ENCODE measurements at regions of chr15 and their contacts with region 1.

Region 1: GRCh38 chr15:68536331-68537095 is 42.3 kb upstream of the CORO2B start:
- DNase-seq: no peak
- ATAC-seq: peak; percentile 54
- H3K4me3 ChIP-seq: no peak overlapping the region
- H3K27ac ChIP-seq: no peak overlapping the region
- H3K4me1 ChIP-seq: no peaks in the 10 kb centered on the region
- H3K27me3 ChIP-seq: no peaks in the 10 kb centered on the region
- CTCF ChIP-seq: no peak
- EP300 ChIP-seq: no peak
- POLR2A ChIP-seq: no peak
- RAD21 ChIP-seq: no peak

Region 2: GRCh38 chr15:68383161-68384074 is 153.1 kb before region 1 on chr15:
- CTCF ChIA-PET with region 1: no interaction called
- POLR2A ChIA-PET with region 1: no interaction called
- RAD21 ChIA-PET with region 1: no interaction called
- SMC1A ChIA-PET with region 1: no interaction called
- in situ Hi-C with region 1: no loop called
- intact Hi-C with region 1: loop called (anchors 10 kb)
- DNase-seq: no peak
- ATAC-seq: peak; percentile 79
- H3K4me3 ChIP-seq: no peak overlapping the region
- H3K27ac ChIP-seq: no peak overlapping the region
- H3K4me1 ChIP-seq: no peaks in the 10 kb centered on the region
- H3K27me3 ChIP-seq: no peaks in the 10 kb centered on the region; a peak in 2 of 4 replicates
- CTCF ChIP-seq: peak; percentile 54 to 69 (median 59)
- EP300 ChIP-seq: no peak
- POLR2A ChIP-seq: no peak
- RAD21 ChIP-seq: peak; percentile 60

Region 3: DNA sequence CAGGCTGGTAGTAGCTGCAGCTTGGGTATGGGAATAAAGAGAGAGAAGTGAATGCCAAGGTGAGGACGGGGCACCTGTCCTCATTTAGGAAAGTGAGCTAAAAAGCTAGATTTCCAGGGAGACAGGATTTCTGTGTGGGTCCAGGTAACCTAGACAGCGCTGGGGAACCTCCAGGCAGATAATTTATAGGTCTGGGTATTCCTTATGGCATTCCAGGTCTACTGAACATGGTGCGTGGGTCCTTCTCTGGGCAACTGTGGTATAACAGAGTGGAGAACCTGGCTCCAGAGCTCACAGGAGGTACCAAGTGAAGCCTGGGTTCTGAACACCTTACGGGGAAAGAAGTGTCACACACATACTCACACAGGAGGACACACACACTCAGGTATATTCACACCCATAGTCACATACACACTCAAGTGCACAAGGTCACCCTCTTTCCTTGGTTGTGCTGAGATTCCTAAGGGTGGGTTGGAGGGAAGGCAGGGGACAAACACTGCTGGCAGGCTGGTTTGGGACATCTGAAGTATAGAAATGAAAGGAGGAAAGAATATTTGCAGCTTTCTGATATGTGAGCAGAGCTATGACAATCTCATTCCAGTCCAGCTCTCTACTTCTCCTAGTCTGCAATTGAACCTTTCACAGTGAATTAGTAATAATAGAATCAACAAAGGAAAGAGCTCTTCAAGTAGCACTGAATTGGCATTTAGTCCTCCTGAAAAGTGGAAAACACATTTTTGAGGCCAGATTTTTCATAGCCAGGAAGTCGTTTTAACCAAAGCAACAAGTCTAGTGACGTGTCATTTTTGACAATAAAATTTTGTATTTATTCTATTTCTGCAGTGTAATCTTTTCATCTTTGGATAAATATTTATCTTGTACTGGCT is 67.1 kb before region 1 on chr15:
- CTCF ChIA-PET with region 1: no interaction called
- POLR2A ChIA-PET with region 1: no interaction called
- RAD21 ChIA-PET with region 1: no interaction called
- SMC1A ChIA-PET with region 1: no interaction called
- in situ Hi-C with region 1: no loop called
- intact Hi-C with region 1: no loop called
- DNase-seq: no peak
- ATAC-seq: no peak
- H3K4me3 ChIP-seq: no peak overlapping the region
- H3K27ac ChIP-seq: no peak overlapping the region
- H3K4me1 ChIP-seq: no peaks in the 10 kb centered on the region
- H3K27me3 ChIP-seq: peaks cover 0 to 3% of the 10 kb centered on the region in 2 experiments; a peak in 2 of 4 replicates
- CTCF ChIP-seq: no peak
- EP300 ChIP-seq: no peak
- POLR2A ChIP-seq: no peak
- RAD21 ChIP-seq: no peak

Region 4: DNA sequence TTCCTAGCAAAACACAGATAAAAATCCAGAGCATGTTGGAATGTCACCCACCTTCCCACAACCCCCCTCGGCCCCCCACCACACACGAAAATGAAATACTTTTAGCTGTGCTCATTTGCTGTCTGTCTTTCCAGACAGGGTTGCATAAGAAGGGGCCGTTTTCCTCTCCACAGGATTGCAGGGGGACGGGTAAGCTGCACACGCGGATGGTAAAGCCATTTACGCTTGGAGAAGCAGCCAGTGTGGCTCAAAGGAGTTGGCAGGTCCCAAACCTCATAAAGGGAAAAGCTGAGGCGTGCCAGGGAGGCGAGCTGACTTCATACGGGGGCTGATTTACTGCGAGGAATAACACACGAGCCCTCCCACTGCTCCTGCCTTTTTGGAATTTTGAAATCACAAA is 57.1 kb before region 1 on chr15:
- CTCF ChIA-PET with region 1: no interaction called
- POLR2A ChIA-PET with region 1: no interaction called
- RAD21 ChIA-PET with region 1: no interaction called
- SMC1A ChIA-PET with region 1: no interaction called
- in situ Hi-C with region 1: no loop called
- intact Hi-C with region 1: no loop called
- DNase-seq: no peak
- ATAC-seq: no peak
- H3K4me3 ChIP-seq: no peak overlapping the region
- H3K27ac ChIP-seq: no peak overlapping the region
- H3K4me1 ChIP-seq: no peaks in the 10 kb centered on the region
- H3K27me3 ChIP-seq: no peaks in the 10 kb centered on the region; a peak in 1 of 4 replicates
- CTCF ChIP-seq: no peak
- EP300 ChIP-seq: no peak
- POLR2A ChIP-seq: no peak
- RAD21 ChIP-seq: no peak

Region 5: DNA sequence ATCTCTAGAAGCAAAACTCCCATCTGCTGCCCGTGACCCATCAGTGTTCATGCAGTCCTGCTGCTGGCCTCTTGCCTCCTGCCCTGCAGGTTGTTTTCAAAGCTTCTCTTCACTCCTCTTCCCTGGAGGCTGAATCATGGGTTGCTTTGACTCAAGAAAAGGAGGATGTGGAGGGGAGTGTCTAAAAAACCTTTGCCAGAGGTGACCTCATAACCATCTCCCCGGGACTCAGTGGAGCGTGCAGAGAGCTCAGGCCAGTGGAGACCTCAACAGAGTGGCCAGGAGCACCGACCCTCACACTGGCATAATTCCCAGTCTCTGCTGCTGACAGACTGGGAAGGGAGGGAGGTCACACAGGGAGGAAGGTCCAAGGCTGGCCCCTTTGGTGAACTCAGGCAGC is 43.7 kb before region 1 on chr15:
- CTCF ChIA-PET with region 1: no interaction called
- POLR2A ChIA-PET with region 1: no interaction called
- RAD21 ChIA-PET with region 1: no interaction called
- SMC1A ChIA-PET with region 1: no interaction called
- in situ Hi-C with region 1: no loop called
- intact Hi-C with region 1: no loop called
- DNase-seq: no peak
- ATAC-seq: no peak
- H3K4me3 ChIP-seq: no peak overlapping the region
- H3K27ac ChIP-seq: no peak overlapping the region
- H3K4me1 ChIP-seq: no peaks in the 10 kb centered on the region
- H3K27me3 ChIP-seq: peaks cover 0 to 5% of the 10 kb centered on the region in 2 experiments; a peak in 1 of 4 replicates
- CTCF ChIP-seq: no peak
- EP300 ChIP-seq: no peak
- POLR2A ChIP-seq: no peak
- RAD21 ChIP-seq: no peak

Region 6: DNA sequence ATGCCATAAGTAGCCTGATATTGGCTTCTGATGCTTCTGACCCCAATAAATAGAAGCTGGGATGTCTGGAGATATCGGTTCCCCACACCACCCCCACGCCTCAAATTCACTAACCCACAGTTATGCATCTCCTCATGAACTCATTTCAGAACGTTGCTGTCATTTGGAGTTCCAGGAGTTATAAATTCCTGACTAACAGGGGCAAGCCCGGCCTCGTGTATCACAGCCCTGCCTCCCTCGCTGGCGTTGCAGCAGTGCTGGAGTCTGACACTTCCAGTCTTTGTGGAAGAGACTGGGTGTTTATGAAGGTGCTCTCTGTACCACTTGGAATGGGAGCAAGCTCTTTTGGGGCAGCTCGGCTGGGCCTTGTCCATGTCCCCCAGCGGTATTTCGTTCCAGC is 183.2 kb after region 1 on chr15:
- CTCF ChIA-PET with region 1: no interaction called
- POLR2A ChIA-PET with region 1: no interaction called
- RAD21 ChIA-PET with region 1: no interaction called
- SMC1A ChIA-PET with region 1: no interaction called
- in situ Hi-C with region 1: no loop called
- intact Hi-C with region 1: no loop called
- DNase-seq: no peak
- ATAC-seq: no peak
- H3K4me3 ChIP-seq: no peak overlapping the region
- H3K27ac ChIP-seq: no peak overlapping the region
- H3K4me1 ChIP-seq: no peaks in the 10 kb centered on the region
- H3K27me3 ChIP-seq: peaks cover 0 to 2% of the 10 kb centered on the region in 2 experiments; a peak in 1 of 4 replicates
- CTCF ChIP-seq: no peak
- EP300 ChIP-seq: no peak
- POLR2A ChIP-seq: no peak
- RAD21 ChIP-seq: no peak